ENCODE measurements at regions of chr9 and their contacts with region 1.

Region 1: DNA sequence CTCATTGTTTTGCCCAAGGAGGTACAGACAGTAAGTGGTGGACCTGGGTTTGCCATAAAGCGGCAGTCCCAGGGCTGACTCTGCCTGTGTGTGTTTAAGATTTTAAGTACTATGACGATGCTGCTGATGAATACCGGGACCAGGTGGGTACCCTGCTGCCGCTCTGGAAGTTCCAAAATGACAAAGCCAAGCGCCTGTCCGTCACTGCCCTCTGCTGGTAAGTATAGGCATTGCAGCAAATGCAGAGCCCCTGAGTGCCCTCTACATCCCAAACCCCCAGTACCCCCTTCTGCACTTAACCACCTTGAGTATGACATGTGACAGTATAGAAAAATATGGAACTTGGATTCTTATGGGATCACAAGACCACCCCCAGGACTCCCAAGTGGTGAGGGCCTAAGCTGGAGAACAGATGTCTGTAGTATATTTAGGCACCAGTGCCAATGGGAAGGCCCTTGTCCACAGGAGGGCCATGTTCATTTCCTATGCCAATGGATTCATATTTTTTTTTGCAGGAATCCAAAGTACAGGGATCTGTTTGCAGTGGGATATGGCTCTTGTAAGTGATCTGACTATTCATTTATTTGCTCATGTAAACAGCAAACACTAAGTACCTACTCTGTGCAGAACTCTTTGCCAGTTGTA is 22.0 kb downstream of the ENHO start:
- DNase-seq: peak; percentile 60
- H3K4me3 ChIP-seq: no peak overlapping the region
- H3K27ac ChIP-seq: no peak overlapping the region
- H3K4me1 ChIP-seq: no peaks in the 10 kb centered on the region
- H3K27me3 ChIP-seq: no peaks in the 10 kb centered on the region
- CTCF ChIP-seq: peak; percentile 97

Region 2: DNA sequence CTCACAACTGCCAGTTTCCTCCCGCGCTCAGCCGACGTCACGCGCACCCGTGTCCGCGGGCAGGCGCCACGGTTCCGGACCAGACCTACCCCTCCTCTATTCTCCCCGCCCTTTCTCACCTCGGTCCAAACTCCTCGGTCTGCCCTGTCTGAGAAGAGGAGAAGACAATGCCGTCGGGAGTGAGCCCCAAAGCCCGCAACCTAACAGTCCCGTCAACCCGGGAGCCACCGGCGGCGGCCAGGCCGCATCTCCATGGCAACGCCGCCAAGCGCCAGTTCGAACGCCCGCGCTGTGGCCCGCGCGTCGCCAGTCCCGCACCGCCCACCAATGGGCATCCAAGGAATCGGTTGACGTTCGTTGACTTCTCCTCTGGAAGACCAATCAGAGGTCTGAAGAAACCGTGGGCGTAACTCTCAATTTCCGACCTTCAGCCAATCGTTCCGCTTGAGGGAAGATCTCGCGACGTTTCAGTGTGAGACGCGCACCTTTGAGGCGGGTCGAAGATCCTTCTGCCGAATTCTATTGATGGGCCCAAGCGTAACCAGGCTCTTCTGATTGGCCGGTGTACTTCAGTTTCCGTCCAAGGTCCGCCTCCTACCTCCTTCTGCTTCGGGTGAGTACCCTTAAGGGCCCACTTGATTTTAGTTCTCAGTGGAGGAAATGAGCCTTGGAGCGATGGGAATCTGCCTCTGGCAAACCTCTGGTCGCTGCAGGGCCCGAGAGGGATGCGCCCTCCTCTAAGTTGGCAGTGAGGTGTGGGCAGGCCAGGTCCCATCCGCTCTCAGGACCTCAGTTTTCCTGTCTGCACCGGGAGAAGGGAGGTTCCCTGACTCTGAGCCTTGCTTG is 171.5 kb before region 1 on chr9 and contains the starts of genes KIF24 and NUDT2:
- CTCF ChIA-PET with region 1: no interaction called
- POLR2A ChIA-PET with region 1: no interaction called
- intact Hi-C with region 1: loop called (anchors 1 kb)
- DNase-seq: peak; percentile 100
- H3K4me3 ChIP-seq: peak within 1 kb of the TSS; percentile 87
- H3K27ac ChIP-seq: peak within 1 kb of the TSS; percentile 91
- H3K4me1 ChIP-seq: peaks cover 30% of the 10 kb centered on the region
- H3K27me3 ChIP-seq: no peaks in the 10 kb centered on the region
- CTCF ChIP-seq: no peak
- total RNA-seq, gene KIF24: 10.6 and 11.6 TPM in 2 replicates
- total RNA-seq, gene NUDT2: 19.1 and 25.3 TPM in 2 replicates

Region 3: DNA sequence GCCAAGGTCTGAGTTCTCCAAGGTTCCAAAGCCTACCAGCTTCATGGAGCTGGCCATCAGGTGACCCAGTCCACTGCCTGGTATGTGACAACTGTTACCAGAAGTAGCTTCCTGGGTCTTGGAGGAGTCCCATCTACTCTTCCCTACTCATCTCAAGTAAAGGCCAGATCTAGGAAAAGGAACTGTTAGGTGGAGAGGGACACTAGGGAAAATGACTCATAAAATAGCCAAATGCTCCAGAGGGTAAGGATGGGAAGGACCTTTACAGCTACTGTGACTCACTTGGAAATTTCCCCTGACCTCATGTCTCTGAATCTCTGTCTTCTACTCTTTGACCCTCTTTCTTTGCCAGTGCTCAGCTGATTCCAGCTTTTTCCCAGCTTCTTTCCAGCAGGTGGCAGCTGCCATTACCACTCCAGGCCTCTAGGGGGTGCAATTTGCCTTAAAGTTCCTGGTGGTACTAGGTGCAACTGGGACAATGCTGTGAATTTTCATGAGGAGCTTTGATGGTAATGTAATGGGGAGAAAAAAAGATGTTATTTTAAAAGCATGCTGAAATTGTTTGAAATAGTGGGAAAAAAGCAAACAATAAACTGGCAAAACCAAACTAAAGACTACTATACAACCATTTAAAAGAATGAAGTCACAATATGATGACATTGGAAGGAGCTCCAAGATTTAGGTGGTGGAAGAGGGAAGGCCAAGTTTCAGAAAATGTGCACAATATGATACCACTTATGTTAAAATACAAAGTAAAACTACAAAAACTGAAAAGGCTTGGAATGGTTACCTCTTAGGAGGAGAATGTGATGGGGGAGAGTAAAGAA is 97.0 kb before region 1 on chr9:
- CTCF ChIA-PET with region 1: interaction called, 9 read pairs
- POLR2A ChIA-PET with region 1: interaction called, 3 read pairs
- intact Hi-C with region 1: loop called (anchors 1 kb)
- DNase-seq: peak; percentile 75
- H3K4me3 ChIP-seq: no peak overlapping the region
- H3K27ac ChIP-seq: no peak overlapping the region
- H3K4me1 ChIP-seq: no peaks in the 10 kb centered on the region
- H3K27me3 ChIP-seq: no peaks in the 10 kb centered on the region
- CTCF ChIP-seq: peak; percentile 95

Region 4: GRCh38 chr9:34417734-34418133 is 83.0 kb before region 1 on chr9:
- CTCF ChIA-PET with region 1: no interaction called
- POLR2A ChIA-PET with region 1: no interaction called
- intact Hi-C with region 1: loop called (anchors 5 kb)
- DNase-seq: no peak
- H3K4me3 ChIP-seq: no peak overlapping the region
- H3K27ac ChIP-seq: no peak overlapping the region
- H3K4me1 ChIP-seq: no peaks in the 10 kb centered on the region
- H3K27me3 ChIP-seq: no peaks in the 10 kb centered on the region
- CTCF ChIP-seq: no peak

Region 5: DNA sequence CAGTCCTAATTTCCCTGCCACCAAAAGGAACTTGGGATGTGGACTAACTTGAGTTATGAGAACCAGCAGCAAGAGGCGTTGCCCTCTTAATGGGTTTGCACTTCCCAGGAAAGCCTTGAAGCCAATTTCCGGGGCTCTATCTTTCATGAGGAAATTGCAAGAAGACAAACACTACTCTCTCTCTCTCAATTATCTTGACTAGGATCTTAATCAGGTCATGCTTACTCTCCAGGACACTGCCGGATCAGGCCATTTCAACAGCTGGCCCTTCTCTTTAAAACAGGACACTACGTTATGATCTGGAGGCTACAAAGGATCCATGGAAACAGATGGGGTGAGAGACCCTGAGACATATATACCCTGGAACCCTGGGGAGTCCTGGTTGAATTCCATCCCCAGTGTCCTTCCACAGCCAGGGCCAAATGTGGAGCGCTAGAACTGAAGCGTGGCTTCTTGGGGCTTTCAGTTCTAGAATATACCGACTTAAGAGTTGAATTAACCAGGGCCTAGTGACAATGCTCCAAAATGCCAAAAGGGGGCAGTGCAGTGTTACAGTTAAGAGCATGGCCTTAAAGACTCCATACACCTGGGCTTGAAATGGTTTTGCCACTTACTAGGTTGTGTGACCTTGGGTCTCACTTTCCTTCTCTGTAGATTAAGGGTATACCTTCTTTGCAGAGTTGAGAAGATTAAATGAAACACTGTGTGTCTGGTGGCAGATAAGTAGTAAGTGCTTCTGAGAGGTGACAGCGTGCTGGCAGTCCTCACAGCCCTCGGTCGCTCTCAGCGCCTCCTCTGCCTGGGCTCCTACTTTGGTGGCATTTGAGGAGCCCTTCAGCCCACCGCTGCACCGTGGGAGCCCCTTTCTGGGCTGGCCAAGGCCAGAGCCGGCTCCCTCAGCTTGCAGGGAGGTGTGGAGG is 63.5 kb before region 1 on chr9:
- CTCF ChIA-PET with region 1: interaction called, 3 read pairs
- POLR2A ChIA-PET with region 1: no interaction called
- intact Hi-C with region 1: loop called (anchors 1 kb)
- DNase-seq: peak; percentile 81
- H3K4me3 ChIP-seq: no peak overlapping the region
- H3K27ac ChIP-seq: no peak overlapping the region
- H3K4me1 ChIP-seq: peaks cover 25% of the 10 kb centered on the region
- H3K27me3 ChIP-seq: no peaks in the 10 kb centered on the region
- CTCF ChIP-seq: peak; percentile 88

Region 6: GRCh38 chr9:34603610-34604231 is 103.0 kb after region 1 on chr9:
- CTCF ChIA-PET with region 1: no interaction called
- POLR2A ChIA-PET with region 1: no interaction called
- intact Hi-C with region 1: loop called (anchors 5 kb)
- DNase-seq: peak; percentile 88
- H3K4me3 ChIP-seq: no peak overlapping the region
- H3K27ac ChIP-seq: no peak overlapping the region
- H3K4me1 ChIP-seq: no peaks in the 10 kb centered on the region
- H3K27me3 ChIP-seq: no peaks in the 10 kb centered on the region
- CTCF ChIP-seq: peak; percentile 96